Head of caudate nucleus (tissue), 42 donors: ENCODE measurements at regions of chr14 and their contacts with region 1.

Region 1: DNA sequence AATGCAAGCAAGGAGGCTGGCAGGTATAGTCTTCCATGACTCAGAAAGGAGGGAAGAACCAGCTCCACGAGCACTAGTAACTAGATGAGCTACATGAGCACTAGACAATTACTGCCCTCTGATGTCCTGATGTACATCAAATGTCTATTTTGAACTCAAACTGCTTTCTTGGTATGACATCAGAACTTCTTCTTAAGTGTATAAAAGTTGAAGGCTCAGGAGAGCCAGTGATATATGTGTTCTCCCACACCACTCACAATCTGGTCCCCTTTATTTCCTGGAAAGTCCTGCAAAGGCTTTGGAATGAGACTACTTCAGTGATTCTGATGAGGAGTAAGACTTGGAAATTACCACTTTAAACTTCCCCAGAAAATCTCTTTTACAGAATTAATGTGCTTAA is 18.5 kb upstream of the DHRS7 start:
- DNase-seq: no peak

Region 2: DNA sequence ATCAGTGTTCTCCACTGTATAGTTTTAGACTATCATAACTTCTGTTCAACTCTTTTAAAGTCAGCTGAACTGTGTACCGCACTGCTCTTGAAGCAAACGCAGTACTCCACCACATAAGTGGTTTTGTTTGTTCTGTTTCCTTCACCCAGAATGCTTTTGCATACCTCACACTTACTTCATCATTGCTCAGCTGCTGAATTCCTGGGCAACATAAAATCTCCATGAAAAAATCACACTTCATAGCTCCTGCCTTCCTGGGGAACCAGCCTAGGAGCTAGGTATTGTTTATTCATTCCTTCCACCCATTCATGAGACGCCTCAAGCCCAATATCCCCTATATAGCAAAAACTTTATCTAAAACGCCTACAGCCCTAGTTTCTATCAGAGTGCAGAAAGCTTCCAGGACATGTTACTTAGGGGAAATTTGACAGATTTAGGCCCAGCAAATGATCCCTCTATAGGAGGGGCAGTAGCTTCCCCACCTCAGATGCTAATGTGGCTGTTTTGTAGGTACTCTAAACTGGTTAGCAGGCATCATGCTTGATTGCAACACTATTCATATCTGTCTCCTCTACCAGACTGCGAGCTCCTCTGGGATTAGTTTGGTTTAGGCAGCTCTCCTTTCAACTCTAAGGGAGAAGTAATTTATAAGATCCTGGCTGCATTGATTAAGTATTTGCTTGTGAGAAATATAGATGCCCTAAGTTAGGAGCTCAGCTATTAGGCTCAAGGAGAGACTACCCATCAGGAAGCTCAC is 219.3 kb before region 1 on chr14:
- intact Hi-C with region 1: loop called (anchors 5 kb)
- DNase-seq: no peak

Region 3: GRCh38 chr14:59997449-59997848 is 186.3 kb before region 1 on chr14:
- intact Hi-C with region 1: no loop called
- DNase-seq: no peak